Activated T-helper 2 cell treated with anti-CD3 and anti-CD28 coated beads, Interferon-gamma antibody, Interleukin-2, Interleukin-4, amounts not matched to agents 10 μg/mL and 5 μg/mL and 100 μg/mL, durations not matched to agents 14 hours and 24 hours and 36 hours (primary cell): ENCODE measurements at regions of chr2 and their contacts with region 1.

Region 1: DNA sequence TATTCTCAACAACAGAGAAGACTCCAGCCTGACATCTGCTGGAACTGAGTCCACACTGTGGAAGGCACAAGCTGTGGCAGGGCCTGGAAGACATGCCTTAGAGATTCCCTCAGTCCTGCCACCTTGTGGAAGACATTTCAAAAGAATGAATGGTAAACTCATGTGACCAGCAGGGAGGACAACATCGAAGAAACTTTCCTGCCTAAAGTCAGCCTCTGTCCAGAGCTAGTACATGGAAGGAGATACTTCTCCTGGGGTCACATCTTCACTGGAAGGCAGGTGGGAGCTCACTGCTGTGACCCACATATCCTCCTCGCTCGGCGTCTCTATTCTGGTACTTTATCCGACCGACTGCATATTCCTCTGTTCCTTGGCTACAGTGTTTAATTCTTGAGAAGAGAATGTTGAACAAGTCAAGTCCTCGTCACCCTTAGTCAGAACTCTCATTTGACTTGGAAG is 59.5 kb downstream of the PUM2 start:
- DNase-seq: no peak
- H3K4me3 Mint-ChIP-seq: no peak overlapping the region
- H3K27ac Mint-ChIP-seq: peak overlapping the region; percentile 2
- H3K4me1 Mint-ChIP-seq: peaks cover 3% of the 10 kb centered on the region
- H3K27me3 Mint-ChIP-seq: no peaks in the 10 kb centered on the region

Region 2: GRCh38 chr2:19932928-19933327 is 358.2 kb before region 1 on chr2:
- intact Hi-C with region 1: no loop called
- DNase-seq: no peak
- H3K4me3 Mint-ChIP-seq: no peak overlapping the region
- H3K27ac Mint-ChIP-seq: no peak overlapping the region
- H3K4me1 Mint-ChIP-seq: no peaks in the 10 kb centered on the region
- H3K27me3 Mint-ChIP-seq: no peaks in the 10 kb centered on the region

Region 3: GRCh38 chr2:20254731-20255130 is 36.4 kb before region 1 on chr2:
- intact Hi-C with region 1: loop called (anchors 5 kb)
- DNase-seq: no peak
- H3K4me3 Mint-ChIP-seq: no peak overlapping the region
- H3K27ac Mint-ChIP-seq: no peak overlapping the region
- H3K4me1 Mint-ChIP-seq: peaks cover 2% of the 10 kb centered on the region
- H3K27me3 Mint-ChIP-seq: no peaks in the 10 kb centered on the region